Activated CD4-positive, alpha-beta T cell treated with anti-CD3 and anti-CD28 coated beads for 36 hours (primary cell): ENCODE measurements at regions of chr1 and their contacts with region 1.

Region 1: GRCh38 chr1:39091845-39092645 is 65.9 kb downstream of the NDUFS5 start:
- DNase-seq: peak; percentile 82
- ATAC-seq: peak; percentile 81
- H3K4me3 Mint-ChIP-seq: no peak overlapping the region
- H3K27ac Mint-ChIP-seq: no peak overlapping the region
- H3K4me1 Mint-ChIP-seq: peaks cover 3% of the 10 kb centered on the region
- H3K27me3 Mint-ChIP-seq: no peaks in the 10 kb centered on the region

Region 2: DNA sequence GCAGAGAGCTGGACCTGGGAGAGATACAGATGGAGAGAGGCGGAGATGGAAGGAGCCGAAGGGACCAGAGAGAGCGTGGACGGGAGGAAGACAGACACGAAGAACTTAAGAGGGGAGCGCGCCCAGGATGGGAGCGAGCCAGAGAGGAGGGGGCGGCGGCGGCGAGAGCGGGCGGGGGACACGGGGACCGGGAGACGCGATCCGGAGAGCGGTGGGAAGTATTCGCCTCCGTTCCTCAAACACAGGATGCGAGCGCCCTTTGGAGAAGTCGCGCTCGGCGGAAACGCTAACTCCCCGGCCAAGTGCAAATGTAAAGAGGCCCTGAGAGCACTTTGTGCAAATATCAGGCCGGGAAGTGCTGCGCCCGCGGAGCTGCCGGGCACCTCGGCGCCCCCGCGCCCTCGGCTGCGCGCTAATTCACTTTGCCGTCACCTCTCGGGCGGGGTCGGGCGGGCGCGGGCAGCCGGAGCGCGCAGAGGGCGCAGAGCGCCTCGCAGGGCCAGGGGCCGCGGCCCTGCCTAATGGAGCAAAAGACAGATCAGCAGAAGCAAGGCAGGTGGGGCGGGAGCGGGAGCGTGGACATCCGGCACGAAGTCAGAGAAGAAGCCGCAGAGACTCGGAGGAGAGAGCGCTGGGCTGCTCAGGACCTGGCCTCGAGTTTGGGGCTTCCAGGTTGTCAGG is 513.6 kb before region 1 on chr1:
- CTCF ChIA-PET with region 1: no interaction called
- POLR2A ChIA-PET with region 1: no interaction called
- intact Hi-C with region 1: no loop called
- DNase-seq: peak; percentile 37
- ATAC-seq: peak; percentile 16
- H3K4me3 Mint-ChIP-seq: peak overlapping the region; percentile 45
- H3K27ac Mint-ChIP-seq: no peak overlapping the region
- H3K4me1 Mint-ChIP-seq: peaks cover 5% of the 10 kb centered on the region
- H3K27me3 Mint-ChIP-seq: peaks cover 30% of the 10 kb centered on the region

Region 3: DNA sequence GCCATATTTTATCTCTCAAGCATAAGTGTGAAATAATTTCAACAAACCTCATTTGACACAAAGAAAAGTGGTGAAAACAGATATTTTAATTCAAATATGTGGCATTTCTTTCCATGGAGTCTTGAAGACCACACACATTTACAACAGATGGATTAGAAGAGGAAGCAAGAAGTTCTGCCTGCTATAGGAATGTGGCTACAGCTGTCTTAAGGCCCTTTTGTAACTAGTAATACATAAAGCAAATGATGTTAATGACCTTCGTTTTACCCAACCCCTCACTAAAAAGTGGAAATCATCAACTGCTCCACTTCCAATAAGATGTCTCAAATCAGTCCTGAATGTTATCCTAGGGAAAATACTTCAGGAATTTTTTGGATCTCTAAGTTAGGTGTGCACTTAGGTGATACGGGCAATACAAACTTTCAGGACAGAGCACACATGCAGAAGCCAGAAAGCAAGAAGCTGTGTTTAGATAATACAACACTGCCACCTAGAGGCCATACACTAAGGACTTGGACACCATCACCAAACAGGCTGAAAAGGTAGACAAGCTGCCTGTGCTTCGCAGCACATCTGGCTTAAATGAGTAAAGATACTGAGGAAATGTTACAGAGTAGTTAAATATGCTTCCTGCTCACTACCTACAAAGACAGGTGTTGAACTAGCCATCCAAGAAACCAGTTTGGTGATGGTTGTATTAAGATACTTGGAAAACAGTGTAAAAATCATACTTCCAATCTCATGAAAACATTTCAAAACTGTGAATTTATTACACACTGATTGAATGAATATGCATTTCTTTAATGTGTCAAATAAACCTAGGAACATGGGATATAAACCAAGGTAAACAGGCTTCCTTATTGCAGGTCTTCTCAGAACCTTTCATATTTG is 256.9 kb before region 1 on chr1:
- CTCF ChIA-PET with region 1: interaction called, 6 read pairs
- POLR2A ChIA-PET with region 1: no interaction called
- intact Hi-C with region 1: loop called in 1 of 2 experiments (anchors 5 kb)
- DNase-seq: peak; percentile 53
- ATAC-seq: peak; percentile 90
- H3K4me3 Mint-ChIP-seq: no peak overlapping the region
- H3K27ac Mint-ChIP-seq: no peak overlapping the region
- H3K4me1 Mint-ChIP-seq: no peaks in the 10 kb centered on the region
- H3K27me3 Mint-ChIP-seq: peaks cover 1% of the 10 kb centered on the region

Region 4: DNA sequence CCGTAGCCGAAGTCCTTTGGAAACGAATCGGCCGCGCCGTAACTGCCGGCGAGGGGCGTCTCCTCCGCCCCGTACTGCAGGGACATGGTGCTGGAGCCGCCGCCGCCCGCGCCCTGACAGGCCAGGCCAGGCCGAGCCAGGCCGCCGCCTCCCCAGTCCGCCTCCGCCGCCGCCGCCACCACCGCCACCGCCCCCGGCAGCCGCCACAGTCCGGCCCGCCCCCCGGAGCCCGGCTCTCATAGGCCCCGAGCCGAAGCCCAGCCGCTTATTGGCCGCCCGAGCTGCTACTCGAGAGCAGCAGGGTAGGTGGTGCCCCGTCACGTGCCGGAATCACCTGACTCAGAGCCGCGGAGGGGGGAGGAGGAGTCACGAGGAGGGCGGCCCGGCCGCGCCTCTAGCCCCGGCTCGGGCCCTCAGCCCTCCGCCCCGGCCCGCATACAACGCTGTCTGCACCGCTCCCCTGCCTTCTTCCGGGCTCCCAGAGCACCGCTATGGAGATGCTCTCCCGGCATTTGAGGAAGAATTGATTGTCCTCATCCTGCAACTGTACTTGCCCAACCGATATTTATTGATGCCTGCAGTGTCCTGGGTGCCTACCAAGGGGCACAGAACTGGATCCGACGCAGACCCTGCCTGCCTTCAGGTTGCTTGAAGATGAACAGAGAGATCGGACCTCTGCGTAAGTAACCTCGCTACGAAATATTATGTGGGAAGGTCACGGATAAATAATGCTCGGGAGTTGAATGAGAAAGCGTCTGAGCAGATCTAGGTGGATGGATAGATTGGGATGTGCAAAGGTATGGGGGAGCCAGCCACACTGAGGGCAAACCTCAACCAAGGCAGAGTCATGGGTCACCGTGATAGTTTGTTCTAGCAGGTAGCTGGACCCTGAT is 232.2 kb before region 1 on chr1 and contains the start of gene RRAGC:
- CTCF ChIA-PET with region 1: no interaction called
- POLR2A ChIA-PET with region 1: no interaction called
- intact Hi-C with region 1: loop called (anchors 5 kb)
- DNase-seq: peak; percentile 99
- ATAC-seq: peak; percentile 98
- H3K4me3 Mint-ChIP-seq: peak within 1 kb of the TSS; percentile 98
- H3K27ac Mint-ChIP-seq: peak within 1 kb of the TSS; percentile 91
- H3K4me1 Mint-ChIP-seq: peaks cover 58% of the 10 kb centered on the region
- H3K27me3 Mint-ChIP-seq: no peaks in the 10 kb centered on the region
- total RNA-seq, gene RRAGC: 15.8 to 19.0 TPM

Region 5: DNA sequence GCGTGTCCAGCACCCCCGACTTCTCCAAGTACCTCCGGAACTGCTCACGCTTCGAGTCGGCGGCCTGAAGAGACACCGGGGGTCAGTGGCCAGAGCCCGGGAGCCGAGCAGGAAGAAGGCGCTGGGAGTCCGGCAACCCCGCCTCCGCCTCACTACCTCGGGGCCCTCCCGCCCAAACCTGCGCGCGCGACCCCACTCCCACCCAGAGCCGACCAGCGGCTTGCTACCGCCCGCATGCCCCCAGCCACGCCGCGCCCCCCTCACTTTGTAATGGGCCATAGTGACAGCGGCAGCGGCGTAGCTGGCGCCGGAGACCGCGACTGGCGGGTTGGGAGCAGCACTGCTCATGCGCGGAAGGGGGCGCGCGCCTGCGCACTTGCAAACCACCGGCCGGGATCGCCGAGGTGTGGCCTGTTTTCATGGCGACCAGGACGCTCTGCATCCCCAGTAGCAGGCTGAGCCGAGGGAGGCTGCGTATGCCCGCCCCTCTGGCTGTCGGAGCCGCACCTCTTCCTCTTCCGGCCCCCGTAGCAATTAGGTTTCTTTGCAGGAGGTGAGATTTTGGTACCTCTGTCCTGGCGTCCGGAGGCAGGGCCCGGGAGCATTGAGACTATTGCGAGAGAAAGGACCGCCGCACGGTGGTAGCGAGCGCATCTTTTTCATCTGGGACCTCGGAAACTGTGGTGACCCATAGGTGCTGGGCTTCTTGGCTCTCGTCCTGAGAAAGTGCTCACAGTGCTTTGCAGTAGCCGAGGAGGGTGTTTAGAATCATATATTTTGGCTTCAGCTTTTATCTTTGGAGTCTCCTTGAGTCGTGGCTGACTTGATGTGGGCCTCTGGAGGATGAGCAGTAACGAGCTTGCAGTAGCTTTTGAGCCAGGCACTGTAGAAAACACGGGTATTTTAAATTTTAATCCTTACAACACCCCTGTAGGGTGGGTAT is 218.7 kb before region 1 on chr1 and contains the start of gene MYCBP:
- CTCF ChIA-PET with region 1: no interaction called
- POLR2A ChIA-PET with region 1: no interaction called
- intact Hi-C with region 1: loop called in 1 of 2 experiments (anchors 1 kb)
- DNase-seq: peak; percentile 97
- ATAC-seq: peak; percentile 99
- H3K4me3 Mint-ChIP-seq: peak within 1 kb of the TSS; percentile 92
- H3K27ac Mint-ChIP-seq: peak within 1 kb of the TSS; percentile 83
- H3K4me1 Mint-ChIP-seq: peaks cover 26% of the 10 kb centered on the region
- H3K27me3 Mint-ChIP-seq: no peaks in the 10 kb centered on the region
- total RNA-seq, gene MYCBP: 44.4 to 46.8 TPM

Region 6: GRCh38 chr1:39081266-39082009 is 10.6 kb before region 1 on chr1:
- CTCF ChIA-PET with region 1: interaction called, 13 read pairs
- POLR2A ChIA-PET with region 1: no interaction called
- intact Hi-C with region 1: no loop called
- DNase-seq: peak; percentile 45
- ATAC-seq: peak; percentile 61
- H3K4me3 Mint-ChIP-seq: no peak overlapping the region
- H3K27ac Mint-ChIP-seq: no peak overlapping the region
- H3K4me1 Mint-ChIP-seq: peaks cover 8% of the 10 kb centered on the region
- H3K27me3 Mint-ChIP-seq: peaks cover 32% of the 10 kb centered on the region